ENCODE measurements at regions of chr15 and their contacts with region 1.

Region 1: DNA sequence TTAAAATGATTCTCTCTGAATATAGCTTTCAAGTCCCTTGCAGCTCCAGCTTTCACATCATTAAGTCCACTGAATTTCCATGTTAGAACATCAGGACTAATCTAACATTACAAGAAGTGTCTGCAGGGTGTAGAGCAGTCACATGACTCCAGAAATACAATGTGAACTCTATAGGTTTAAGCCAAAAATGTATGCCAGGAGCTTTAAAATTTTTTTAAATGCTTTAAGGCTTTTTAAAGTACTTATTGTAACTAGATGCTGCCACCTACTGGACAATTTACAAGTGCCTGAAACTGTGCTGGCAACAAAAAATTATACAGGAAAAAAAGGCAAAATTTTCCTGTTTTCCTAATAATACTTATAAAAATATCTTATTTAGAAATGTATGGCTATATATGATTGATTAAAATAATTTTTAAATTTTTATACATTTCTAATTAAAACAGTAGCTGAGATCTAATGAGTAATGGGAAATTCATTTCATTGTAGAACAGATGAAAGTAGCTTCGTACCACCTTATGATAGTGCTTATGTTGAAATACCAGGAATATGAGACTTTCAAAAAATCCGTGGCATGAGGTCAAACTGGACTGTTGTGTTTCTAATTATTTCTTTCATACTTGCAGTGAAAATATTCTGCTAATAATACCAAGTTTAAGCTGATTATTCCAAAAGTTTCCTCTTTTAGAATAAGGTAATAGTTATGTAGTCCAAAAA is 25.7 kb downstream of the FSIP1 start:
- DNase-seq: no peak
- H3K4me3 ChIP-seq: no peak overlapping the region
- H3K27ac ChIP-seq: no peak overlapping the region
- H3K4me1 ChIP-seq: no peaks in the 10 kb centered on the region
- H3K27me3 ChIP-seq: no peaks in the 10 kb centered on the region
- CTCF ChIP-seq: peak; percentile 86

Region 2: DNA sequence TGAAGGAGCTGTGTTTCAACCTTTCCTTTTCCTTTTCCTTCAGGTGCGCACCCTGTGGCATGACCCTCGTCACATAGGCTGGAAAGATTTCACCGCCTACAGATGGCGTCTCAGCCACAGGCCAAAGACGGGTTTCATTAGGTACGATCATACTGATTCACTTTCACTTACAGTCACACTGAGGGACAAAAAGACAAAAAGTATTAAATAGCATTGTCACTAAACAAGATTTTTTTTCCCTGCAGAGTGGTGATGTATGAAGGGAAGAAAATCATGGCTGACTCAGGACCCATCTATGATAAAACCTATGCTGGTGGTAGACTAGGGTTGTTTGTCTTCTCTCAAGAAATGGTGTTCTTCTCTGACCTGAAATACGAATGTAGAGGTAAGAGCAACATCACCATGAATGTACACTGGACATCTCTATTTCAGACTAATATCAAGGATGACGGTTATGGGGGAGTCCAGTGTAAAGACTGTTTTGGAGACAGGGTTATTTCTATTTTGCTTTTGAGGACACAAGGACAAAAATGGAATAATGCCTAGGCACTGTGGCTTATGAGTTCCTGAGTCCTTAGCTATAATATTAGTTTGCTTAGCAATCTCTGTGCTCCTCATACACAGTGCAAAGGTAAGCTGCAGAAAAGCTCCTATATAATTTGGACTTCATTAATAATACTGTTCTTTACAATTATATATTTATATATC is 162.8 kb before region 1 on chr15:
- intact Hi-C with region 1: loop called (anchors 10 kb)
- DNase-seq: no peak
- H3K4me3 ChIP-seq: no peak overlapping the region
- H3K27ac ChIP-seq: no peak overlapping the region
- H3K4me1 ChIP-seq: peaks cover 3% of the 10 kb centered on the region
- H3K27me3 ChIP-seq: no peaks in the 10 kb centered on the region
- CTCF ChIP-seq: no peak

Region 3: DNA sequence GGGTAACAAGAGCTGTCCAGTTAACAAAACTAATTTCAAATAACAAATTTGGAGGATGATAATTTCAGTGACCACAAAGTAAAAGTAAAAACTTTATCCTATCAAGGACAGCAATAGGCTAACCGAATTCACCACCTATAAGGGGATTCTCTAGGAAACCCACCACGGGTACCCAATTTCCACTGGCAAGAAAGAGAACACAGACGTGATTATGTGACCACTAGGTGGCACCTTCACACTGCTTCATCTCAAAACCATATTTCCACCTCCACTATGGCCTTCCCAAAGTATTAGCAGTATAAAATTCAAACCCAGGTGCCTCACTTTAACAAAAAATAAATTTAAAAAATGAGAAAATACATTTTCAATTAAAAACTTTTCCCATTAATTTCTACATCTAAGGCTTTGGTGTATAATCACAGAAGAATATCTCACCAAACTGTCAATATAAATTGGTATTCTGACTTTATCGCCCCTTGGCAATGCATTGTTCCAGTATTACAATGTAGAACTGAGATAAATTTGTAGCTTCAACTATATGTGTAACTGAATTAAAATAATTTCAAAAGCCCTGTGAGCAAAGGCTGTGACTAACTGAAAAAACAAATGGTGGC is 70.9 kb before region 1 on chr15:
- intact Hi-C with region 1: loop called (anchors 5 kb)
- DNase-seq: no peak
- H3K4me3 ChIP-seq: no peak overlapping the region
- H3K27ac ChIP-seq: no peak overlapping the region
- H3K4me1 ChIP-seq: peaks cover 6% of the 10 kb centered on the region
- H3K27me3 ChIP-seq: no peaks in the 10 kb centered on the region
- CTCF ChIP-seq: peak; percentile 87

Measured in left ventricle myocardium inferior (tissue), 1 donor.